ENCODE measurements at regions of chr3 and their contacts with region 1.

Region 1: GRCh38 chr3:184513276-184514170 is 48.1 kb upstream of the EPHB3 start:
- DNase-seq: peak; percentile 83
- H3K4me3 Mint-ChIP-seq: peak overlapping the region; percentile 39
- H3K27ac Mint-ChIP-seq: no peak overlapping the region
- H3K4me1 Mint-ChIP-seq: peaks cover 11% of the 10 kb centered on the region
- H3K27me3 Mint-ChIP-seq: peaks cover 67% of the 10 kb centered on the region

Region 2: DNA sequence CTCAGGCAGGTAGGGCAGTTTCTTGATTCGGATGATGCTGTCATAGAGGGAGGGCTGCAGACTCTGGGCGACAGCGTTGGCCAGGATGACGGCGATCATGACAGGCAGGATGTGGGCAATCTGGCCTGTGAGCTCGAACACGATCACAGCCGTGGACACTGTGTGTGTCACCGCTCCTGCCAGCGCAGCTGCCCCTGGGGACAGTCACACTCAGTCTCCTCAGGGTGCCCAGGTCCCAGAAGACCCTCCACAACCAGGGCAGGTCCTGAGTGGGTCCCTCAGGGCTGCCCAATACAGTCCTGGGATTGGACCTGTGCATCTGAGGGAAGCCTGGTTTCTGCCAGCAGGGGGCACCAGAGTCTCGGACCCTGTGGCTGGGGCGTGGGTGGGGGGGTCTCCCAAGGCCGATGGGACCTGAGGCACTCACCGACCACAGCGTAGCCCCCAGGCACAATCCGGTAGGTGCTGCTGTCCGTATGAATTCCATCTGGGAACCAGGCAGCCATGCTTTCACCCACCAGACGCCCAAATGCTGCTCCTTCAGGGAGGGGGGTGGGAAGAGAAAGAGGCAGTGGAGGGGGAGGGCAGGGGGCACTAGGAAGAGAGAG is 159.3 kb before region 1 on chr3:
- CTCF ChIA-PET with region 1: interaction called, 20 read pairs
- POLR2A ChIA-PET with region 1: no interaction called
- DNase-seq: peak; percentile 54
- H3K4me3 Mint-ChIP-seq: no peak overlapping the region
- H3K27ac Mint-ChIP-seq: no peak overlapping the region
- H3K4me1 Mint-ChIP-seq: peaks cover 5% of the 10 kb centered on the region
- H3K27me3 Mint-ChIP-seq: no peaks in the 10 kb centered on the region

Region 3: GRCh38 chr3:184417619-184418327 is 95.8 kb before region 1 on chr3:
- CTCF ChIA-PET with region 1: interaction called, 17 read pairs
- POLR2A ChIA-PET with region 1: interaction called, 3 read pairs
- DNase-seq: peak; percentile 73
- H3K4me3 Mint-ChIP-seq: no peak overlapping the region
- H3K27ac Mint-ChIP-seq: no peak overlapping the region
- H3K4me1 Mint-ChIP-seq: peaks cover 2% of the 10 kb centered on the region
- H3K27me3 Mint-ChIP-seq: peaks cover 5% of the 10 kb centered on the region

Region 4: GRCh38 chr3:184523825-184524615 is 10.5 kb after region 1 on chr3:
- CTCF ChIA-PET with region 1: interaction called, 74 read pairs
- POLR2A ChIA-PET with region 1: interaction called, 16 read pairs
- DNase-seq: peak; percentile 63
- H3K4me3 Mint-ChIP-seq: peak overlapping the region; percentile 47
- H3K27ac Mint-ChIP-seq: peak overlapping the region; percentile 81
- H3K4me1 Mint-ChIP-seq: peaks cover 26% of the 10 kb centered on the region
- H3K27me3 Mint-ChIP-seq: peaks cover 25% of the 10 kb centered on the region

Region 5: GRCh38 chr3:184543843-184544512 is 30.5 kb after region 1 on chr3:
- CTCF ChIA-PET with region 1: interaction called, 30 read pairs
- POLR2A ChIA-PET with region 1: no interaction called
- DNase-seq: peak; percentile 81
- H3K4me3 Mint-ChIP-seq: no peak overlapping the region
- H3K27ac Mint-ChIP-seq: no peak overlapping the region
- H3K4me1 Mint-ChIP-seq: peaks cover 8% of the 10 kb centered on the region
- H3K27me3 Mint-ChIP-seq: peaks cover 22% of the 10 kb centered on the region

Region 6: DNA sequence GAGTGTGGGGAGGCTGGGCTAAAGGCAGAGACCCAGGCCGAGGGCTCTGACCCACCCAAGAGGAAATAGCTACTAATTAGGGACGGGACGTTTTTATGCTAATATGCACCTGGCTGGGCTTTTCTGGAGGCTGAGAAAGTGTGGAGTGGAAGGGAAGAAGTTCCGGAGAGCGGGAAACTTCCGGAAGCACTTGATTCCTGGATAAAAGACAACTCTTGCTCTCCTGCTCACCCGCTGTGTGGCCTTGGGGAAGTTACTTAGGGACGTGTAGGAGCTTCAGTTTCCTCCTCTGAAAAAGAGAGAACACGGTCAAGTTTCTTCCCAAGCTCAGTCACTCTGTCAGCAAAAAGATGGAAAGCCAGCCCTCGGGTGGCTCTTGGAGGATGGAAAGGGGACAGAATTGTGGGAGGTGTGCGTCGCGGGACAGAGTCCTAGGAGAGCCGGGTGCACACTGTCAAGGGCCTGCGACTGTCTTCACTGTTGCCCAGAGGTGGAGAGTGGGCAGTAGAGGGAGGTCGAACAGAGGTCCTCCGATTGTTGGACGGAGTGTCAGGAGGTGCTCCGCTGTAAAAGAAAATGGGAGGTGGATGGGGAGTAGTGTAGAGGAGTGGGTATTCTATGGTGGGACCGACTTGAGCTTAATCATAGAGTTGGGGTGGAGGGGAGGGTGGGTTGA is 91.2 kb after region 1 on chr3:
- CTCF ChIA-PET with region 1: no interaction called
- POLR2A ChIA-PET with region 1: no interaction called
- DNase-seq: no peak
- H3K4me3 Mint-ChIP-seq: no peak overlapping the region
- H3K27ac Mint-ChIP-seq: no peak overlapping the region
- H3K4me1 Mint-ChIP-seq: no peaks in the 10 kb centered on the region
- H3K27me3 Mint-ChIP-seq: peaks cover 52% of the 10 kb centered on the region